Breast epithelium (tissue), 4 donors: ENCODE measurements at regions of chr15 and their contacts with region 1.

Region 1: GRCh38 chr15:89524184-89524583 is 27.8 kb upstream of the RHCG start:
- DNase-seq: no peak
- H3K4me3 ChIP-seq: no peak overlapping the region
- H3K27ac ChIP-seq: no peak overlapping the region
- H3K4me1 ChIP-seq: no peaks in the 10 kb centered on the region
- H3K27me3 ChIP-seq: no peaks in the 10 kb centered on the region
- CTCF ChIP-seq: no peak
- POLR2A ChIP-seq: no peak

Region 2: GRCh38 chr15:88681610-88682221 is 842.5 kb before region 1 on chr15:
- intact Hi-C with region 1: no loop called
- DNase-seq: no peak
- H3K4me3 ChIP-seq: no peak overlapping the region
- H3K27ac ChIP-seq: no peak overlapping the region
- H3K4me1 ChIP-seq: no peaks in the 10 kb centered on the region
- H3K27me3 ChIP-seq: no peaks in the 10 kb centered on the region
- CTCF ChIP-seq: no peak
- POLR2A ChIP-seq: no peak

Region 3: GRCh38 chr15:89475661-89476060 is 48.5 kb before region 1 on chr15:
- intact Hi-C with region 1: no loop called
- DNase-seq: no peak
- H3K4me3 ChIP-seq: no peak overlapping the region
- H3K27ac ChIP-seq: no peak overlapping the region
- H3K4me1 ChIP-seq: no peaks in the 10 kb centered on the region
- H3K27me3 ChIP-seq: peaks cover 0 to 47% of the 10 kb centered on the region in 2 donors
- CTCF ChIP-seq: no peak
- POLR2A ChIP-seq: no peak

Region 4: DNA sequence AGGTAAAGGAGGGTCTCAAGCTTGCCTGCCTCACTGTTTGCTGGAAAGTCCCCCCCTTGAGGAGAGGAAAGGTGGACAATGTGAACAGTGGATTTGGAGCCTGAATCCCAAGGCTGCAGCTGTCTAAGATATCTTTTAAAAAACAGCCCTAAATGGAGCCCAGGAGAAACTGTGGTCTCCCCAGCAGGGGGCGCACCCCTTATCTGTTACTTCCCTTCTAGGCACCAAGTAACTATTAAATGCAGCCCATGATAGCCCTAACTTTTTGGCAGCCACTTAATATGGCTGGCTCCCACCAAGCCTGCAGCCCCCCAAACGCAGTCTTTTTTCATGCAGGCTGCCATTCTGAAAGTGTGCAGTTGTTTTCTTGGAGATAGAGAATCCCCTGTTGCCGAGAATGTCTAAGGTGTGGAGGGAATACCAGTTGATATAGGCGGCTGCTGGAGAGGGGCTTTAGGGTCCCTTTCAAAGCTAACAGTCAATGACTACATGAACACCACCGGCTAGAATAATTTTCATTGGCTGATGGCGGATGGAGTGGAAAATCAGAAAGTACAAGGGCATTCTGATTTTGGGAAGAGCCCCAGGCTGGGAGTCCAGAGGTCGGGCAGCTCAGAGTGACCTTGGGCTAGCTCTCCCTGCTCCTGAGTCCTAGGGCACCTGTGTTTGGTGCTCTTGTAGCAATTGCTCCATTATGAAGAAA is 29.1 kb before region 1 on chr15:
- intact Hi-C with region 1: loop called (anchors 1 kb)
- DNase-seq: no peak
- H3K4me3 ChIP-seq: no peak overlapping the region
- H3K27ac ChIP-seq: no peak overlapping the region
- H3K4me1 ChIP-seq: no peaks in the 10 kb centered on the region
- H3K27me3 ChIP-seq: peaks cover 0 to 59% of the 10 kb centered on the region in 2 donors
- CTCF ChIP-seq: no peak
- POLR2A ChIP-seq: no peak